CD4-positive, alpha-beta memory T cell (primary cell): ENCODE measurements at regions of chr12 and their contacts with region 1.

Region 1: GRCh38 chr12:111451649-111452129 is 46.0 kb downstream of the SH2B3 start:
- DNase-seq: peak; percentile 45 to 77 (median 76)
- H3K4me3 ChIP-seq: no peak overlapping the region
- H3K4me3 Mint-ChIP-seq: peak overlapping the region in 1 of 8 donors; percentile 35
- H3K27ac ChIP-seq: peak overlapping the region; percentile 19
- H3K27ac Mint-ChIP-seq: peak overlapping the region; percentile 4 to 87 (median 71)
- H3K4me1 ChIP-seq: peaks cover 39% of the 10 kb centered on the region
- H3K4me1 Mint-ChIP-seq: peaks cover 20 to 60% (median 41%) of the 10 kb centered on the region in 4 donors
- H3K27me3 ChIP-seq: no peaks in the 10 kb centered on the region
- H3K27me3 Mint-ChIP-seq: no peaks in the 10 kb centered on the region

Region 2: GRCh38 chr12:111424793-111425251 is 26.9 kb before region 1 on chr12:
- CTCF ChIA-PET with region 1: interaction called, 55 read pairs
- POLR2A ChIA-PET with region 1: interaction called, 107 read pairs
- intact Hi-C with region 1: no loop called
- DNase-seq: no peak
- H3K4me3 ChIP-seq: no peak overlapping the region
- H3K4me3 Mint-ChIP-seq: peak overlapping the region; percentile 15 to 82 (median 46)
- H3K27ac ChIP-seq: peak overlapping the region; percentile 98
- H3K27ac Mint-ChIP-seq: peak overlapping the region; percentile 77 to 100 (median 96)
- H3K4me1 ChIP-seq: peaks cover 59% of the 10 kb centered on the region
- H3K4me1 Mint-ChIP-seq: peaks cover 40 to 81% (median 60%) of the 10 kb centered on the region in 4 donors
- H3K27me3 ChIP-seq: no peaks in the 10 kb centered on the region
- H3K27me3 Mint-ChIP-seq: no peaks in the 10 kb centered on the region

Region 3: GRCh38 chr12:111462210-111462769 is 10.6 kb after region 1 on chr12:
- CTCF ChIA-PET with region 1: interaction called, 29 read pairs
- POLR2A ChIA-PET with region 1: interaction called, 4 read pairs
- intact Hi-C with region 1: no loop called
- DNase-seq: no peak
- H3K4me3 ChIP-seq: no peak overlapping the region
- H3K4me3 Mint-ChIP-seq: no peak overlapping the region
- H3K27ac ChIP-seq: no peak overlapping the region
- H3K27ac Mint-ChIP-seq: peak overlapping the region in 2 of 7 donors; percentile 65 to 72
- H3K4me1 ChIP-seq: no peaks in the 10 kb centered on the region
- H3K4me1 Mint-ChIP-seq: peaks cover 0 to 1% (median under 1%) of the 10 kb centered on the region in 4 donors
- H3K27me3 ChIP-seq: no peaks in the 10 kb centered on the region
- H3K27me3 Mint-ChIP-seq: no peaks in the 10 kb centered on the region

Region 4: GRCh38 chr12:111482462-111482861 is 30.8 kb after region 1 on chr12:
- CTCF ChIA-PET with region 1: interaction called, 21 read pairs
- POLR2A ChIA-PET with region 1: no interaction called
- intact Hi-C with region 1: no loop called
- DNase-seq: peak in 2 of 5 donors; percentile 2 to 11
- H3K4me3 ChIP-seq: no peak overlapping the region
- H3K4me3 Mint-ChIP-seq: no peak overlapping the region
- H3K27ac ChIP-seq: no peak overlapping the region
- H3K27ac Mint-ChIP-seq: peak overlapping the region in 2 of 7 donors; percentile 32 to 59
- H3K4me1 ChIP-seq: no peaks in the 10 kb centered on the region
- H3K4me1 Mint-ChIP-seq: no peaks in the 10 kb centered on the region
- H3K27me3 ChIP-seq: no peaks in the 10 kb centered on the region
- H3K27me3 Mint-ChIP-seq: no peaks in the 10 kb centered on the region

Region 5: DNA sequence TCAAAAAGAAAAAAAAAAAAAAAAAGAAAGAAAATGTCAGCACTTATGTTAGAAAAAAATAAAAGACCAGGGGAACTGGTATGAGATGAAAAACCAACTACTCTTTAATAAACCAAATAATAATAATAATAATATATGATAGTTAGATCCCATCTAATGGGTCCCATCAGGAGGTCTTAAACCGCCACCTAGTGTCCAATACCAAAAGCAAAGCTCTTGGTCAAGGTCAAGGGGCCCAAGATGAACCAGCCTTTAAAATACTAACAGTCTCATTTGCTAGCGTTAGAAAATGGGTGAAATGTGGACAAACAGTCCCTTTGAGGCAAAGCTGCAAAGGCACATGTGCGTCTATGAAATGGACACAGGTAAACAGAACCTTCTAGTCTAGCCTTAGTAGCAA is 221.8 kb after region 1 on chr12:
- CTCF ChIA-PET with region 1: no interaction called
- POLR2A ChIA-PET with region 1: no interaction called
- intact Hi-C with region 1: loop called (anchors 10 kb)
- DNase-seq: no peak
- H3K4me3 ChIP-seq: no peak overlapping the region
- H3K4me3 Mint-ChIP-seq: no peak overlapping the region
- H3K27ac ChIP-seq: no peak overlapping the region
- H3K27ac Mint-ChIP-seq: no peak overlapping the region
- H3K4me1 ChIP-seq: no peaks in the 10 kb centered on the region
- H3K4me1 Mint-ChIP-seq: peaks cover 0 to 2% (median 0%) of the 10 kb centered on the region in 4 donors
- H3K27me3 ChIP-seq: no peaks in the 10 kb centered on the region
- H3K27me3 Mint-ChIP-seq: no peaks in the 10 kb centered on the region